ENCODE measurements at regions of chr17 and their contacts with region 1.

Region 1: GRCh38 chr17:16353317-16354174 is at the start of gene CENPV:
- DNase-seq: peak in 1 of 2 donors; percentile 65
- H3K4me3 ChIP-seq: peak within 1 kb of the TSS; percentile 92 to 99
- H3K27ac ChIP-seq: peak within 1 kb of the TSS; percentile 63 to 73
- H3K4me1 ChIP-seq: peaks cover 0 to 10% of the 10 kb centered on the region in 2 donors
- H3K27me3 ChIP-seq: no peaks in the 10 kb centered on the region
- CTCF ChIP-seq: no peak
- total RNA-seq, gene CENPV: 37.6 TPM

Region 2: DNA sequence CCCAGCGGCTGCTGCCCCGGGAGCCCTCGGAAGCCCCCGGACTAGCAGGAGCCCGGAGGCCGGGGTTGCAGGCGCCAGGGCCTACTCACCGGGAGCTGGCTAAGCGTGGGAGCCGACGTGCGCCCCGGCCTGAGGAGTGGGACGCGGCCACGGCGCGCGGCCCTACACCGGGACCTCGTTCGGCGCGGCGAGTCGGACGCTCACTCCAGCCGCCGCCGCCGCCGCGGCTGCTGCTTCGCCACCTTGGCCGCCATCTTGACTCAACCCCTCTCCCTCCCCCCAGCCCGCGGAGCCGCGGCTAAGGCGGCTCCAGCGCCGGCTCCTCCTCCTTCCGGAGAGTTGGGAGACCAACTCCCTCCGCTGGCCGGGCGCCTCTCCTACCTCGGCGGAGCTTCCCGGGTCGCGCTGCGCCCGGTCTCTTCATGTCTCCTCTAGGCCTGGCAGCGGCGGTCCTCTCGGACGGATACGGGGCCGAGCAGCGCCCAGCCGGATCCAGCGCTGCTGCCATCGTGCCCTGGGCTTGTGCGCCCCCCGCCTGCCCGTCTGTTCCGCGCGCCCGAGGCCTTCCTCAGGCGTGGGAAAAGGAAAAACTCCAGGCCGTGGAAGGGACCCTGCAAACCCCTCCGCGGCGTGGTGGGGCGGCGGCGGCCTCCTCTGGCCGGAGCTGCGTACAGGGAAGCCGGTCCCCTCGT is 138.1 kb before region 1 on chr17 and contains the start of gene NCOR1:
- intact Hi-C with region 1: loop called (anchors 2 kb)
- DNase-seq: peak; percentile 41 to 95
- H3K4me3 ChIP-seq: peak within 1 kb of the TSS; percentile 84 to 97
- H3K27ac ChIP-seq: peak within 1 kb of the TSS; percentile 95 to 98
- H3K4me1 ChIP-seq: peaks cover 0 to 12% of the 10 kb centered on the region in 2 donors
- H3K27me3 ChIP-seq: no peaks in the 10 kb centered on the region
- CTCF ChIP-seq: peak; percentile 6 to 52 (median 36)
- total RNA-seq, gene NCOR1: 81.0 TPM

Region 3: DNA sequence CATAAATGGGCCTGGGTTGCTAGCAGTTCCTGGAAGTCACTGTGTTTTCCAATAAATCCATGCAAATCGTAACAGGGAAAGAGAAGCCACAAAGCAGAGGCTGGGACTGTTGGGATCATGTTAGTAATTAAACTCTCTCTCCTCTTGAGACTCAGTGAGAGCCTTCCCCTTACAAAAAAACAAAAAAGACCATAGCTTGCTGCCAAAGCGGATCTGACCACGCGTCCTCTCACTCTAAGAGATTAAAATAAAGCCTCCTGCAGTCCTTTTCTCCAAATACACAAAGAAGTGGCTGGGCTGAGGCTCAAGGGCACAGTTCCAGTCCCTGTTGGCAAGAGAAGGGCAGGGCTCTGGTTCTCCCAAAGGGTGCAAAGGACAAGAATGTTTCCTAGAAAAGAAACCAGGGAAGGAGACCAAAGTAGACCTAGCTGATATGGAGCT is 98.0 kb before region 1 on chr17:
- intact Hi-C with region 1: loop called (anchors 5 kb)
- DNase-seq: peak in 1 of 2 donors; percentile 86
- H3K4me3 ChIP-seq: peak overlapping the region; percentile 30 to 35
- H3K27ac ChIP-seq: peak overlapping the region; percentile 58 to 59
- H3K4me1 ChIP-seq: peaks cover 0 to 10% of the 10 kb centered on the region in 2 donors
- H3K27me3 ChIP-seq: no peaks in the 10 kb centered on the region
- CTCF ChIP-seq: no peak

Measured in ascending aorta (tissue), 2 donors.